BJ (cell line): ENCODE measurements at regions of chr21 and their contacts with region 1.

Region 1: DNA sequence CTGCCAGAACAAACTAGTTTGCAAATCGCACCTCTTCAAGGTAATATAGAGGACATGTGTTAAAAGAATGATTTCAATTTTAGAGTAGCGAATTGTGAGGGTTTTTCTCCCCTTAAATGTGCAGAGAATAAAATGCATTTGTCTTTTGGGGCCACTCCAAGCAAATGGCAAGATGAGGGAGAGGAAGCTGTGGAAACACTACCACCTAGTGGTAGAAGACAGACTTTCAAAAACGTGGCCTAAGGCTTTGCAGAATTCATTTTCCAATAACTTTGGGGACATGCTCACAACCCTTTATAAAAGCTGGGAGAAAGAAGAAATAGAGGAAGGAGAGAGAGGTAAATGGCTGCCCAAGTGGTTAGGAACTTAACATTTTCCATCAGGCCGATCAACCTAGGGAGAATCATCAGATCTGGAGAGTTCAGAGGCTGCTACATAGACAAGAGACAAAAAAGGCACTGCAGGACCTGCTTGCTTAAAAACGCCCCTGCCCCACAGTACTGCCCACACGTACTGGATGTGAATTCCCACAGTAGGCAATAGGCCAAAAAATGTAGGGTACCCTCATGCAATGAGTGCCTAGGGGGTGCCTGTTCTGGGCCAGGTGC is 15.7 kb upstream of the RCAN1 start:
- DNase-seq: no peak
- H3K4me3 ChIP-seq: no peak overlapping the region
- H3K27me3 ChIP-seq: peaks cover 21% of the 10 kb centered on the region
- CTCF ChIP-seq: peak; percentile 72

Region 2: DNA sequence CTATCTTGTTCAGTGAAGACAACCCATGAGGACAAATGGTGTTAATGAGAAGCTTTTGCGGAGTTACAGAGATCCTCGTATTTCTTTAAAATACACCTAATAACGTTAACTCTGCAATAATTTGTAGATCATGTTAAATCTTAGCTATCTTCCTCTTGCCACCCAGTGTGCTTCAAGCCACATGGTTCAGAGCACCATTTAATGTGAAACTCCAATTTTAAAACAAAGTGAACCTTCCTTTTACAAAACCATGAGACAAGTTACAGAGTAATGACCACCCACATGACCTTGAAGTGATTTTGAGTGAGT is 268.6 kb before region 1 on chr21:
- CTCF ChIA-PET with region 1: interaction called, 12 read pairs
- POLR2A ChIA-PET with region 1: no interaction called
- DNase-seq: no peak
- H3K4me3 ChIP-seq: no peak overlapping the region
- H3K27me3 ChIP-seq: no peaks in the 10 kb centered on the region
- CTCF ChIP-seq: no peak

Region 3: GRCh38 chr21:34367321-34367935 is 263.2 kb before region 1 on chr21:
- CTCF ChIA-PET with region 1: interaction called, 12 read pairs
- POLR2A ChIA-PET with region 1: no interaction called
- DNase-seq: peak; percentile 81
- H3K4me3 ChIP-seq: no peak overlapping the region
- H3K27me3 ChIP-seq: no peaks in the 10 kb centered on the region; the same call in 1 of the 2 replicates
- CTCF ChIP-seq: peak; percentile 86

Region 4: GRCh38 chr21:34592120-34592955 is 38.3 kb before region 1 on chr21:
- CTCF ChIA-PET with region 1: no interaction called
- POLR2A ChIA-PET with region 1: no interaction called
- DNase-seq: no peak
- H3K4me3 ChIP-seq: no peak overlapping the region
- H3K27me3 ChIP-seq: no peaks in the 10 kb centered on the region
- CTCF ChIP-seq: no peak

Region 5: GRCh38 chr21:34614633-34615486 is 15.8 kb before region 1 on chr21 and contains the start of gene RCAN1:
- CTCF ChIA-PET with region 1: interaction called, 13 read pairs
- POLR2A ChIA-PET with region 1: no interaction called
- DNase-seq: peak; percentile 56
- H3K4me3 ChIP-seq: peak within 1 kb of the TSS; percentile 76
- H3K27me3 ChIP-seq: peaks cover 4% of the 10 kb centered on the region
- CTCF ChIP-seq: no peak
- polyA plus RNA-seq, gene RCAN1: 56.2 and 91.8 TPM in 2 replicates

Region 6: GRCh38 chr21:34693192-34693810 is 62.7 kb after region 1 on chr21:
- CTCF ChIA-PET with region 1: no interaction called
- POLR2A ChIA-PET with region 1: no interaction called
- DNase-seq: no peak
- H3K4me3 ChIP-seq: no peak overlapping the region
- H3K27me3 ChIP-seq: peaks cover 4% of the 10 kb centered on the region
- CTCF ChIP-seq: peak; percentile 81